Panc1 (cell line): ENCODE measurements at regions of chr1 and their contacts with region 1.

Region 1: GRCh38 chr1:39876144-39876543 is 7.2 kb downstream of the TRIT1 start:
- DNase-seq: no peak
- ATAC-seq: no peak
- H3K4me3 ChIP-seq: no peak overlapping the region
- H3K27ac ChIP-seq: no peak overlapping the region
- H3K4me1 ChIP-seq: peaks cover under 1% of the 10 kb centered on the region; the same call in 1 of the 2 replicates
- H3K27me3 ChIP-seq: no peaks in the 10 kb centered on the region
- CTCF ChIP-seq: no peak

Region 2: DNA sequence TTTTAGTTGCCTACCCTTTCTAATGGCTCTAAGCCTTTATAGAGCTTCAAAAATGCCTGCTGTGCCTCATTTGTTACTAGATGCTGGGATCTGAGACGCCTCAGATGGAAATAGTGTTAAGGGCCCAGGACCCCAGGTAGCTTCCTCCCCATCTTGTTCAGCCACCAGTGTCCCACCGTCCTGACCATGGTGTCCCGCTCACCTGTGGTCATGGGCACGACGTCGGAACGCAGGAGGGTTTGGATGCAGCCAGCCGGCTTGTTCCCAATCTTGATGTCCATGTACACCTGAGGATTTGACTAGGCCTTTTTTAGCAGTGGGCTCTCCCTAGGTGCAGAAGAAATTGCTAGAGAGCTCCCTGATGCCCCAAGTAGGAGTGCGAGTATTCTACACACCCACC is 330.6 kb before region 1 on chr1:
- CTCF ChIA-PET with region 1: no interaction called
- POLR2A ChIA-PET with region 1: no interaction called
- in situ Hi-C with region 1: no loop called
- intact Hi-C with region 1: no loop called
- DNase-seq: no peak
- ATAC-seq: no peak
- H3K4me3 ChIP-seq: no peak overlapping the region
- H3K27ac ChIP-seq: no peak overlapping the region
- H3K4me1 ChIP-seq: no peaks in the 10 kb centered on the region
- H3K27me3 ChIP-seq: no peaks in the 10 kb centered on the region
- CTCF ChIP-seq: no peak

Region 3: DNA sequence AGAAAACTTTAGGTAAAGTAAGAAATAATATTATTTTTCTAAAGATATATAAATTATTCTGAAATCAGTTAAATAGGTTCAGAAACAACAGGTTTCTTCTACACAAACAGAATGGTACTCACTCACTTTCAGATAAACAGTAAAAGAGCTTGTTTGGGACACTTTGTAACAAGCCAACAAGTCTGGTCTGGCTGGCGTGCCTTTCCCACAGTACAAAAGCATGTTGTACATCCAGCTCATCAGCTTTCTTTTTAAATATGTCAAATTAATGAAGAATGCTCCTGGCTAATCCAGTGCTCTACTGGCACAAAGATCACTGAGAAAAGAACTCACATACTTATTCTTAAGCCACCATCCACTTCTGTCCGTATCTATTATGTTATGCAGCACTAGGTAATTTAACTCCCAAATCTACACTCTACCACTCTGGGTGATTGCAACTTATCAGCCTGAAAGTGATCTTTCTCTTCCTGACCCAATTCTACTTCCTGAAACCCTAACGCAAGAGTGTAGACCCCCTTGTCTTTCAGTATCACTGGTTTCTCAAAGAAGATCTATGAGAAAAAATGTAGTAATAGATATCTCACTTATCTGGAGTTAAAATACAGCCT is 25.4 kb before region 1 on chr1:
- CTCF ChIA-PET with region 1: no interaction called
- POLR2A ChIA-PET with region 1: interaction called, 12 read pairs
- in situ Hi-C with region 1: no loop called
- intact Hi-C with region 1: no loop called
- DNase-seq: no peak
- ATAC-seq: no peak
- H3K4me3 ChIP-seq: no peak overlapping the region
- H3K27ac ChIP-seq: no peak overlapping the region
- H3K4me1 ChIP-seq: peaks cover 11% of the 10 kb centered on the region
- H3K27me3 ChIP-seq: no peaks in the 10 kb centered on the region
- CTCF ChIP-seq: no peak

Region 4: DNA sequence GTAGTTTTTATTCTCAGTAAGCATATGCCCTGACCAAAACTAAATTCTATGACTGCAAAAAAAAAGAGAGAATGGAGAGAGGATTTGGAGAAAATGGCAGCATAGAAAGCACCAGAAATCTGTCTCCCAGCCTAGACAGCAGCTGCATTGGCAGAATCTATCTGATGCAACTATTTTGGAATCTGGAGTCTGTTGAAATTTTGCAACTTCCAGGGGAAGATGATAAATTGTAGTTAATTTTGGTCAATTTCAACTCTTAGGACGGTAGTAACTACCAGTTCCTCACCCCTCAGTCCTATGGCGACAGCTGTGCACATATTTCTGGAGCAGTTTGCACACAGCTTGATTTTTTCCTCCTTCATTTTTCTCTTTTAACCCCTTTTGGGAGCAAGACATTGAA is 643.4 kb after region 1 on chr1:
- CTCF ChIA-PET with region 1: no interaction called
- POLR2A ChIA-PET with region 1: interaction called, 11 read pairs
- in situ Hi-C with region 1: no loop called
- intact Hi-C with region 1: no loop called
- DNase-seq: no peak
- ATAC-seq: no peak
- H3K4me3 ChIP-seq: no peak overlapping the region
- H3K27ac ChIP-seq: no peak overlapping the region
- H3K4me1 ChIP-seq: no peaks in the 10 kb centered on the region
- H3K27me3 ChIP-seq: no peaks in the 10 kb centered on the region
- CTCF ChIP-seq: no peak